AG04450 (cell line): ENCODE measurements at regions of chr5 and their contacts with region 1.

Region 1: GRCh38 chr5:33423018-33423630 is 17.6 kb upstream of the TARS1 start:
- DNase-seq: no peak
- H3K4me3 ChIP-seq: no peak overlapping the region
- H3K27ac ChIP-seq: no peak overlapping the region
- H3K27me3 ChIP-seq: no peaks in the 10 kb centered on the region
- CTCF ChIP-seq: peak; percentile 40

Region 2: DNA sequence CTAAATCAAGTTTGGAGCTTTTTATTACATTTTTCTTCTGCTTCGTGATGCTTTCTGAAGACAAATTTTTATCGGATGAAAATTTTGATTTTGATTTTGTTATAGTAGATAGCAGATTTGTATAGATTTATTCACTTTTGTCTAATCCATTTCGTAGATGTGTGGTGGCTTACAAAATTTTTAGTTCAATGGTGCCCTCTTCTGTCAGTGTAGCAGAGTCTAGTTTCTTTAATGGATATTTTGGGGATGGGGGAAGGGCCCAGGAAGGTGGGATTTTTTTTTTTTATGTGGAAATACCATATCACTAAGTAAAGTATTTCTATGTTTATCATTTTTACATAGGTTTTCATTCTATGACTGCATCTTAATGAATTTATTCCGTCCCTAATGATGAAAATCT is 242.2 kb before region 1 on chr5:
- CTCF ChIA-PET with region 1: interaction called, 11 read pairs
- POLR2A ChIA-PET with region 1: no interaction called
- DNase-seq: peak; percentile 13
- H3K4me3 ChIP-seq: no peak overlapping the region
- H3K27ac ChIP-seq: no peak overlapping the region
- H3K27me3 ChIP-seq: no peaks in the 10 kb centered on the region
- CTCF ChIP-seq: peak; percentile 63